AG04449 (cell line): ENCODE measurements at regions of chr1 and their contacts with region 1.

Region 1: DNA sequence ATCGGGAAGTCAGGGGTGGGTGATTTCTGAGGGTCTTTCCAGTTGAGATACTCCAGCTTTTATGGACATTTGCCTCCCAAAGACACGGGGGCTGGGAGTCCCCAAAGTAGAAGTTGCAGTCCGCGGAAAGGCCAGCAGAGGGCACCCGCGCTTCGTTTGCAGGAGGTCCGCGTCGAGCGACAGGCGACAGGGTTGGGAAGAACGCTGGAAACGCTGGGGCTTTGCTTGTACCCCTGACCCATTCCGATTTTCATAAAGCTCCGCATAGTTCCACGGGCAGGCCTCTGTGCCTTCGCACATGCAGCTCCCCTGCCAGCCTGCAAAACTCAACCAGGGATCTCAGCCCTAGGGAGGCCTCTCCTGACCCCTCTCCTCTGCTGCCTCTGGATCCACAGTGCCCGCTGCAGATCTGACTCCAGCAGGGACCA is 44.2 kb upstream of the LAPTM5 start:
- DNase-seq: no peak
- H3K4me3 ChIP-seq: peak overlapping the region; percentile 15; the same call in 1 of the 2 replicates
- CTCF ChIP-seq: peak; percentile 95

Region 2: GRCh38 chr1:30525971-30526651 is 275.7 kb before region 1 on chr1:
- CTCF ChIA-PET with region 1: no interaction called
- POLR2A ChIA-PET with region 1: no interaction called
- DNase-seq: no peak
- H3K4me3 ChIP-seq: no peak overlapping the region
- CTCF ChIP-seq: no peak

Region 3: DNA sequence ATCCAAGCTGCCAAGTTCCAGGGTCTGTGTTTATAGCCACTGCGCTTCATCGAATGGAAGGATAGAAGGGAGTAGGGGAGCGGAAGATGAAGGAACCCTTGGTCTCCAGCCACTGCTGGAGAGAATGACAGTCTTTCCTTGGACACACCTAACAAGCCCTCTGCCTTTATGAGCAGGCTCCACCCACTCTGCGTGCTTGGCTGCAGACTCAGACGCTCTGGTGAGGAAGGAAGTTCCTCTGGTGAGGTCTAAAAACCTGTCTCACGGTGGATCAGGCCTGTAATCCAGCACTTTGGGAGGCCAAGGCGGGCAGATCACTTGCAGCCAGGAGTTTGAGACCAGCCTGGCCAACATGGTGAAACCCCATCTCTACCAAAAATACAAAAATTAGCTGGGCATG is 133.8 kb before region 1 on chr1:
- CTCF ChIA-PET with region 1: no interaction called
- POLR2A ChIA-PET with region 1: no interaction called
- DNase-seq: no peak
- H3K4me3 ChIP-seq: no peak overlapping the region
- CTCF ChIP-seq: no peak

Region 4: GRCh38 chr1:30718636-30719405 is 83.0 kb before region 1 on chr1:
- CTCF ChIA-PET with region 1: interaction called, 132 read pairs
- POLR2A ChIA-PET with region 1: no interaction called
- DNase-seq: peak; percentile 86
- H3K4me3 ChIP-seq: peak overlapping the region; percentile 69
- CTCF ChIP-seq: peak; percentile 86

Region 5: DNA sequence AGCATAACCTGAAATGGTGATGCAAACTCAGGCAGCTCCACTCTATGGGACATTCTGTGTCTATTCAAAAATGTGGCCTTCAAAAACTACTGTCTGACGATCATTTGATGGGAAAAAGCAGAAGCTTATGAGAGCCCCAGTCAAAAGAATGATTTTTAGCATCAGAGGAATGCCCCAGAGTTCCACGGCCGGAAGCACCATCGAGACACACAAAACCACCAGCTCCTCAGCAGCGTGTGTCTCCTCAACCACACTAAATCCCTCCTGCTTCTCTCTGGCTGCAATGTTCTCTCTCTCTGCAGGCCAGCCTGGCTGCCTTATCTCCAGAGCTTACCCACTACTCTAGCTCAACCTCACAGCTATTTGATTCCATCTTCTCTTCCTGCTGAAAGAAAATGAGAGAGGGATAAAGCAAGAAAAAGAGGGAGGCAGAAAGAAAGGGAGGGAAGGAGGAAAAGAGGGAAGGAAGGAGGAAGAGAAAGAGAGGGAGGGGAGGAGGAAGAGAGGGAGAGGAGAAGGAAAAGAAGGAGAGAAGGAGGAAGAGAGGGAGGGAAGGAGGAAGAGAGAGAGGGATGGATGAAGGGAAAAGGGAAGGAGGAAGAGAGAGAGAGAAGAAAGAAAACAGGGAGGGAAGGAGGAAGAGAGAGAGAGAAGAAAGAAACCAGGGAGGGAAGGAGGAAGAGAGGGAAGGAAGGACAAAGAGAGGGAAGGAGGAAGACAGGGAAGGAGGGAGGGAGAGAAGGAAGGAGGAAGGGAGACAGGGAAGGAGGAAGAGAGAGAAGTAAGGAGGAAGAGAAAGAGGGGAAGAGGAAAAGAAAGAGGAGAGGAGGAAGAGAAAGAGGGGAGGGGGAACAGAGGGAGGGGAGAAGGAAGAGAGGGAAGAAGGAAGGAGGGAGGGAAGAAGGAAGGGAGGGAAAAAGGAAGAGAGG is 10.7 kb before region 1 on chr1:
- CTCF ChIA-PET with region 1: interaction called, 548 read pairs
- POLR2A ChIA-PET with region 1: no interaction called
- DNase-seq: no peak
- H3K4me3 ChIP-seq: no peak overlapping the region
- CTCF ChIP-seq: no peak

Region 6: GRCh38 chr1:30823969-30824735 is 22.4 kb after region 1 on chr1:
- CTCF ChIA-PET with region 1: interaction called, 57 read pairs
- POLR2A ChIA-PET with region 1: interaction called, 5 read pairs
- DNase-seq: peak; percentile 98
- H3K4me3 ChIP-seq: peak overlapping the region; percentile 68
- CTCF ChIP-seq: no peak

Region 7: GRCh38 chr1:30877205-30877912 is 75.6 kb after region 1 on chr1:
- CTCF ChIA-PET with region 1: interaction called, 10 read pairs
- POLR2A ChIA-PET with region 1: no interaction called
- DNase-seq: no peak
- H3K4me3 ChIP-seq: no peak overlapping the region
- CTCF ChIP-seq: no peak

Region 8: GRCh38 chr1:30911046-30911954 is 109.5 kb after region 1 on chr1:
- CTCF ChIA-PET with region 1: interaction called, 1,030 read pairs
- POLR2A ChIA-PET with region 1: interaction called, 4 read pairs
- DNase-seq: no peak
- H3K4me3 ChIP-seq: no peak overlapping the region
- CTCF ChIP-seq: peak; percentile 94